CD8-positive, alpha-beta memory T cell (primary cell): ENCODE measurements at regions of chr19 and their contacts with region 1.

Region 1: GRCh38 chr19:36850559-36851442 is at the start of gene ZNF345:
- DNase-seq: peak; percentile 75 to 91 (median 85)
- H3K4me3 ChIP-seq: peak within 1 kb of the TSS; percentile 91
- H3K4me3 Mint-ChIP-seq: no peak within 1 kb of the TSS
- H3K27ac ChIP-seq: peak within 1 kb of the TSS; percentile 68
- H3K27ac Mint-ChIP-seq: no peak within 1 kb of the TSS
- H3K4me1 ChIP-seq: peaks cover 18% of the 10 kb centered on the region
- H3K4me1 Mint-ChIP-seq: peaks cover 11 to 30% (median 19%) of the 10 kb centered on the region in 3 donors
- H3K27me3 ChIP-seq: no peaks in the 10 kb centered on the region
- H3K27me3 Mint-ChIP-seq: no peaks in the 10 kb centered on the region
- total RNA-seq, gene ZNF345: 3.9 to 4.9 TPM

Region 2: GRCh38 chr19:36547001-36547732 is 303.6 kb before region 1 on chr19:
- CTCF ChIA-PET with region 1: no interaction called
- POLR2A ChIA-PET with region 1: no interaction called
- DNase-seq: no peak
- H3K4me3 ChIP-seq: no peak overlapping the region
- H3K4me3 Mint-ChIP-seq: no peak overlapping the region
- H3K27ac ChIP-seq: no peak overlapping the region
- H3K27ac Mint-ChIP-seq: no peak overlapping the region
- H3K4me1 ChIP-seq: no peaks in the 10 kb centered on the region
- H3K4me1 Mint-ChIP-seq: no peaks in the 10 kb centered on the region
- H3K27me3 ChIP-seq: no peaks in the 10 kb centered on the region
- H3K27me3 Mint-ChIP-seq: peaks cover 0 to 1% of the 10 kb centered on the region in 2 donors

Region 3: DNA sequence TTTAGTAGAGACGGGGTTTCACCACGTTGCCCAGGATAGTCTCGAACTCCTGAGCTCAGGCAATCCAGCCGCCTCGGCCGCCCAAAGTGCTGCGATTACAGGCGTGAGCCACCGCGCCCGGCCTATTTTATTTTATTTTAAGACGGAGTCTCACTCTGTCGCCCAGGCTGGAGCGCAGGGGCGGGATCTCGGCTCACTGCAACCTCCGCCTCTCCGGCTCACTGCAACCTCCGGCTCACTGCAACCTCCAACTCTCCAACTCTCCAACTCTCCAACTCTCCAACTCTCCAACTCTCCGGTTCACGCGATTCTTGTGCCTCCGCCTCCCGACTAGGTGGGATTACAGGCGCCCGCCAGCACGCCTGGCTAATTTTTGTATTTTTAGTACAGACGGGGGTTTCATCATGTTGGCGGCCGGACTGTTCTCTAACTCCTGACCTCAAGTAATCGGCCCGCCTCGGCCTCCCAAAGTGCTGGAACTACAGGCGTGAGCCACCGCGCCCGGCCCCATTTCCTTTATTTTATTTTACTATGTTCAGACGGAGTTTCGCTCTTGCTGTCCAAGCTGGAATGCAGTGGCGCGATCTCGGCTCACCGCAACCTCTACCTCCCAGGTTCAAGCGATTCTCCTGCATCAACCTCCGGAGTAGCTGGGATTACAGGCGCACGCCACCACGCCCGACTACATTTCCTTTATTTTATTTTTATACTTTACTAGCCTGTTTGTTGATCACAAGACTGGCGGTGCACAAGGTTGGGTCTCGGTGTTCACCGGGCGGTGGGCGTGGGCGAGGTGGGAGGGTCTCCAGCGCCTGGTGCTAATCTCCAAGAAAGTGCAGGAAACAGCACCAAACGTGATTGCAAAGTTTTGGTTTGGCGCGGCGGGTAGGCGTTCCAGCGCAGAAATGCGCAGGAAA is 54.5 kb before region 1 on chr19:
- CTCF ChIA-PET with region 1: no interaction called
- POLR2A ChIA-PET with region 1: interaction called, 12 read pairs
- DNase-seq: no peak
- H3K4me3 ChIP-seq: peak overlapping the region; percentile 93
- H3K4me3 Mint-ChIP-seq: peak overlapping the region; percentile 92 to 99 (median 98)
- H3K27ac ChIP-seq: peak overlapping the region; percentile 82
- H3K27ac Mint-ChIP-seq: peak overlapping the region in 7 of 8 donors; percentile 91 to 100 (median 99)
- H3K4me1 ChIP-seq: no peaks in the 10 kb centered on the region
- H3K4me1 Mint-ChIP-seq: peaks cover 22 to 34% (median 27%) of the 10 kb centered on the region in 3 donors
- H3K27me3 ChIP-seq: no peaks in the 10 kb centered on the region
- H3K27me3 Mint-ChIP-seq: peaks cover 4 to 8% of the 10 kb centered on the region in 2 donors

Region 4: GRCh38 chr19:36837906-36838783 is 12.7 kb before region 1 on chr19 and contains the start of gene ZNF790:
- CTCF ChIA-PET with region 1: interaction called, 17 read pairs
- POLR2A ChIA-PET with region 1: interaction called, 49 read pairs
- DNase-seq: peak; percentile 72 to 88 (median 85)
- H3K4me3 ChIP-seq: peak within 1 kb of the TSS; percentile 69
- H3K4me3 Mint-ChIP-seq: peak within 1 kb of the TSS in 1 of 7 donors; percentile 68
- H3K27ac ChIP-seq: peak within 1 kb of the TSS; percentile 77
- H3K27ac Mint-ChIP-seq: peak within 1 kb of the TSS in 4 of 8 donors; percentile 3 to 47 (median 38)
- H3K4me1 ChIP-seq: peaks cover 14% of the 10 kb centered on the region
- H3K4me1 Mint-ChIP-seq: peaks cover 5 to 21% (median 11%) of the 10 kb centered on the region in 3 donors
- H3K27me3 ChIP-seq: no peaks in the 10 kb centered on the region
- H3K27me3 Mint-ChIP-seq: no peaks in the 10 kb centered on the region
- total RNA-seq, gene ZNF790: 6.4 to 7.0 TPM